Body of pancreas (tissue), 4 donors: ENCODE measurements at regions of chr19 and their contacts with region 1.

Region 1: DNA sequence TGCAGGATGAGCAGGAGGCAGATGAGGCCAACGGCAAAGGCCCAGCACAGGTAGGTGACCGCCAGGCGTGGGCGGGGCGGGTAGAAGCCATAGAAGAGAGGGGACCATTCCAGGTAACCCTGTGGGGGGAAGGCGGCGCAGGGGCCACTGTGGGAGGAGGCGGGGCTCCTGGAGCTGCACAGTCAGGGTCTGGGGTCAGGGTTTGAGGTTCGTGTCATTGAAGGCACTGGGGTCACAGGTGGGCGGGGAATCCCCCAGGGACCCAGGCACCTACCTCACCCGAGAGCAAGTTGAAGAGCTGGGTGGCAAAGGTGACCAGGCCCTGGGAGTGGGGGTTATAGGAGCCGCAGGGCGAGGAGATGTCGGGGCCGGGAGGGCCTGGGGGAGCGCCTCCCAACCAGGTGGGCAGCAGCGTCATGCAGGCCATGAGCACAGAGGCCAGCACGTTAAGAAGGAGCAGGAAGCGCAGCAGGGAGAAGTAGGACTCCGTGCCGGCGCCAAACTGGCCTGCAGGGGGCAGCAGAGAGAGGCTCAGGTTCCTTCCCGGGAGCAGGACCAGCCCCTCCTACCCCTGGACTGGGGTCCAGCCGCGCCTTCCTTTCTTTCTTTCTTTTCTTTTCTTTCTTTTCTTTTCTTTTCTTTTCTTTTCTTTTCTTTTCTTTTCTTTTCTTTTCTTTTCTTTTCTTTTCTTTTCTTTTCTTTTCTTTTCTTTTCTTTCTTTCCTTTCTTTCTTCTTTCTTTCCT is 4.6 kb downstream of the TMC4 start:
- DNase-seq: peak; percentile 90 to 95 (median 93)
- ATAC-seq: peak; percentile 67
- H3K4me3 ChIP-seq: no peak overlapping the region
- H3K27ac ChIP-seq: no peak overlapping the region
- H3K4me1 ChIP-seq: peaks cover 16% of the 10 kb centered on the region
- H3K27me3 ChIP-seq: no peaks in the 10 kb centered on the region
- CTCF ChIP-seq: peak; percentile 67 to 94 (median 86)
- POLR2A ChIP-seq: no peak

Region 2: DNA sequence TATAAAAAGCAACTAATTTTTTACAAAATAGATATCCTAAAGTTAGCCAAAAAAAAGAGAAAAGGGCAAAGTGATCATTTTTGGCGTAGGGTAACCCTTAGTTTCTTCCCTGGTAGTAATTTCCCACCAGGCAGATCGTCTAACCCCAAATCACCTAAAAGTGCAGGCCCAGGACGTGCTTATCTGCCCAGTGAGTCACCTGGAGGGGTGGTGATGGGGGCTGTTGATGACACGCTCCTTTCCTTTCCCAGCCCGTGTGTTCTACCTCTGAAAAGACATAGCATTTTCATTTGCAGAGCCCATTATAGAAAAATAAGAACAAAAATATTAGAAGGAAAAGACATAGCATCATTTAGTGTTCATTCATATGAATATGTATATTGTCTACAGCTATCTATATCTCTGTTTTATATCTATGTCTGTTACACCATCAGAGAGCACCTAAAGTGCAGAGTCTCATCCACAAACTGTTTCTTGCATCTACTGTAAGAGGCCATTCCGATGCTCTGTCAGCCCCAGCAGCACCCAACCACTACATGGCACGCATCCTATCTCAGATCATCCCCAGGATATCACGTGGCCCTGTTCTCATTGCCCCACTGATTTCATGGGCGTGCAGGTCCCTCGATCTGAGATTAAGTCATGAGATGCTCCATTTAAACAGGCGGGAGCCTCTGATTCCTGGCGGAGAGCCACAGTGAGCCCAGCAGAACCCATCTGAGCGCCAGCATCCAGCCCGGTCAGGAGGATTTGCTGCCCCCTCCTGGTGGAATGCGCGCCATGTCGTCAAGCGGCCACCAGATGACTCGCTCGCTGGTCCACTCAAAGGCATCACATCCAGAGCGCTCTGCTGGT is 63.0 kb after region 1 on chr19:
- intact Hi-C with region 1: loop called (anchors 5 kb)
- DNase-seq: peak; percentile 89 to 92 (median 90)
- ATAC-seq: peak; percentile 98
- H3K4me3 ChIP-seq: no peak overlapping the region
- H3K27ac ChIP-seq: no peak overlapping the region
- H3K4me1 ChIP-seq: no peaks in the 10 kb centered on the region
- H3K27me3 ChIP-seq: no peaks in the 10 kb centered on the region
- CTCF ChIP-seq: peak; percentile 83 to 96 (median 92)
- POLR2A ChIP-seq: no peak

Region 3: DNA sequence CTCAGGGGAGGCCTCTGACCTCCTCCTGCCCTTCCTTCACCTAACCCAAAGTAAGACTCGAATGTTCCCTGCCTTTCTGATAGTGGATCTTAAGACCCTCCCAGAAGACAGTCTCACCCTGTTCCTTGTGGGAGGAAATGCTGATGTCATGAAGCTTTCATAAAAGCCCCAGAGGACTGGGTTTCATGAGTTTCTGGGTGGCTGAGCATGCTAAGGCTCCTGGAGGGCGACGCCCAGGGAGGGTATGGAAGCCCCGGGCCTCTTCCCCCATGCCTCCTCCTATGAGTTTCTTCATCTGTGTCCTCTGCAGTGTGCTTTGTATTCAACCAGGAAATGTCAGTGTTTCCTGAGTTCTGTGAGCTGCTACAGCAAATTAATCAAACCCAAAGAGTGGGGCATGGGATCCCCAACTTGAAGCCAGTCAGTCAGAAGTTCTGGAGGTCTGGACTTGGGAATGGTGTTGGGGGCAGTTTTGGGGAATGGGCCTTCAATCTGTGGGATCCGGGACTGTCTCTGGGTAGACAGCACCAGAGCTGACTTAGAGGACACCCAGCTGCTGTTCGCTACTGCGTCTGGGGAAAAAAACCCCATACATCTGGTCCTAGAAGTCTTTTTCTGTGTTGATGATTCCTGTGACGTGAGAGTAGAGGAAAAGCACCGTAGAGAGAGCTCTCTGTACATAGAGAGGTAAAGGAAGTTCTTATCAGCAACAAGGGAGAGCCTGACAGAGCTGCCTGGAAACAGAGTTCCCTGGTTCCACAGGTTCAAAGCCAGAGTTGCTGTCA is 114.5 kb after region 1 on chr19:
- intact Hi-C with region 1: no loop called
- DNase-seq: no peak
- ATAC-seq: no peak
- H3K4me3 ChIP-seq: no peak overlapping the region
- H3K27ac ChIP-seq: peak overlapping the region in 1 of 4 donors; percentile 6
- H3K4me1 ChIP-seq: no peaks in the 10 kb centered on the region
- H3K27me3 ChIP-seq: peaks cover 0 to 5% of the 10 kb centered on the region in 2 donors
- CTCF ChIP-seq: no peak
- POLR2A ChIP-seq: no peak